ENCODE measurements at regions of chr12 and their contacts with region 1.

Region 1: DNA sequence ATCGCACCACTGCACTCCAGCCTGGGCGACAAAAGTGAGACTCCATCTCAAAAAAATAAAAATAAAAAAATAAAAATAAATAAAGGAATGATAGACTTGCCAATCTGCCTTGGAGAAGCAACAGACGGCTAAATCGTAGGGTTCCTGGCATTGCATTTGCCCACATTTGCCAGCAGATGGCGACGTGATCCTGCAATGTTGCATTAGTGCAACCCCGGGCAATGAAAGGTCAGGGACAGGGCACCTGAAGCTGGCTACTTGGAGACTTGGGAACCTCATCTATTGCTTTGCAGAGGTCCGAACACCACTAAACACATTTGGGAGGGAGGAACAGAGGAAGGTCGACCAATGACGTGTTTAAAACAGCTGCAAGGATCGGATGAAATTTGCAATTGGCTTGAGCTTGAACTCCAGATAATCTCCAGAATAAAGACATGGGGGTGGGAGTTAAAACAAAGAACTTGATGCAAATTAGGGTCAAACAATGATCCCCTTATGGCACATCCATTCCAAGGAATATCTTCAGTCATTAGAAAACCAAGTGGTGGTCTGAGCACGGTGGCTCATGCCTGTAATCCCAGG is 34.6 kb downstream of the SPRING1 start:
- DNase-seq: peak; percentile 88
- ATAC-seq: peak; percentile 91
- H3K4me3 ChIP-seq: no peak overlapping the region
- H3K27ac ChIP-seq: no peak overlapping the region
- H3K4me1 ChIP-seq: peaks cover 7% of the 10 kb centered on the region
- H3K27me3 ChIP-seq: no peaks in the 10 kb centered on the region
- CTCF ChIP-seq: peak; percentile 91

Region 2: DNA sequence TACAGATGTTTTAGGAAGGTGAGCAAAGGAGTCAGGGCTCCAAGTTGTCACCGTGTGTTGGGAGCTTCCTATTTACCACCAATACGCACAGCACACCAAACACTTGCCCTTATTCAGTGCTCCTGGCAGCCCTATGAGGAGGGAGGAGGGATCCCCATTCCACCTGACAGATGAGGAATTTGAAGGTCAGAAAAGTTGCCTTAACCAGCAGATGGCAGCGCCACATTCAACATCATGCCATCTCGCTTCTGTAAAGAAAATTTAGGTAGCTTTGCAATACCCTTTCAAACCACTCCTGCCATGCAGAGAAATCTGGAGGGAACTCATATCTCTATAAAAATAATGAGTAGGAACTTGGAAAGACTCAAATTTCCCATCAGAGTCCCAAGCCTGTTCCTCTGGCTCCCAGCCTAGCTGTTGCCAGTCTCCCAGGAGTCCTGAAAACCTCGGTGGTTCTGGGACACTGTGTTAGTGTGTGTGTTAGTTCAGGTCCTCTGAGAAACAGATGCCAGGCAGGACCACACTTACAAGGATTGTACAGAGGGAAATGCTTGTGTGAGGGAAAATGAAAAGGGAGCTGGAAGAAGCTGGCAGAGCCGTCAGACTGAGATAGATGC is 836.3 kb before region 1 on chr12:
- CTCF ChIA-PET with region 1: interaction called, 5 read pairs
- POLR2A ChIA-PET with region 1: no interaction called
- intact Hi-C with region 1: loop called (anchors 10 kb)
- DNase-seq: peak; percentile 66
- ATAC-seq: peak; percentile 75
- H3K4me3 ChIP-seq: no peak overlapping the region
- H3K27ac ChIP-seq: no peak overlapping the region
- H3K4me1 ChIP-seq: peaks cover 16% of the 10 kb centered on the region
- H3K27me3 ChIP-seq: peaks cover 33% of the 10 kb centered on the region
- CTCF ChIP-seq: peak; percentile 70

Region 3: GRCh38 chr12:116852294-116852693 is 149.0 kb after region 1 on chr12:
- CTCF ChIA-PET with region 1: no interaction called
- POLR2A ChIA-PET with region 1: no interaction called
- intact Hi-C with region 1: no loop called
- DNase-seq: no peak
- ATAC-seq: no peak
- H3K4me3 ChIP-seq: no peak overlapping the region
- H3K27ac ChIP-seq: no peak overlapping the region
- H3K4me1 ChIP-seq: peaks cover 7% of the 10 kb centered on the region; the same call in 1 of the 2 replicates
- H3K27me3 ChIP-seq: no peaks in the 10 kb centered on the region
- CTCF ChIP-seq: no peak

Region 4: GRCh38 chr12:116880817-116881324 is 177.6 kb after region 1 on chr12:
- CTCF ChIA-PET with region 1: interaction called, 8 read pairs
- POLR2A ChIA-PET with region 1: no interaction called
- intact Hi-C with region 1: loop called (anchors 1 kb)
- DNase-seq: peak; percentile 72
- ATAC-seq: peak; percentile 83
- H3K4me3 ChIP-seq: peak overlapping the region; percentile 72
- H3K27ac ChIP-seq: no peak overlapping the region
- H3K4me1 ChIP-seq: peaks cover 30% of the 10 kb centered on the region
- H3K27me3 ChIP-seq: peaks cover 27% of the 10 kb centered on the region
- CTCF ChIP-seq: no peak; the same call in 1 of the 2 replicates

Region 5: DNA sequence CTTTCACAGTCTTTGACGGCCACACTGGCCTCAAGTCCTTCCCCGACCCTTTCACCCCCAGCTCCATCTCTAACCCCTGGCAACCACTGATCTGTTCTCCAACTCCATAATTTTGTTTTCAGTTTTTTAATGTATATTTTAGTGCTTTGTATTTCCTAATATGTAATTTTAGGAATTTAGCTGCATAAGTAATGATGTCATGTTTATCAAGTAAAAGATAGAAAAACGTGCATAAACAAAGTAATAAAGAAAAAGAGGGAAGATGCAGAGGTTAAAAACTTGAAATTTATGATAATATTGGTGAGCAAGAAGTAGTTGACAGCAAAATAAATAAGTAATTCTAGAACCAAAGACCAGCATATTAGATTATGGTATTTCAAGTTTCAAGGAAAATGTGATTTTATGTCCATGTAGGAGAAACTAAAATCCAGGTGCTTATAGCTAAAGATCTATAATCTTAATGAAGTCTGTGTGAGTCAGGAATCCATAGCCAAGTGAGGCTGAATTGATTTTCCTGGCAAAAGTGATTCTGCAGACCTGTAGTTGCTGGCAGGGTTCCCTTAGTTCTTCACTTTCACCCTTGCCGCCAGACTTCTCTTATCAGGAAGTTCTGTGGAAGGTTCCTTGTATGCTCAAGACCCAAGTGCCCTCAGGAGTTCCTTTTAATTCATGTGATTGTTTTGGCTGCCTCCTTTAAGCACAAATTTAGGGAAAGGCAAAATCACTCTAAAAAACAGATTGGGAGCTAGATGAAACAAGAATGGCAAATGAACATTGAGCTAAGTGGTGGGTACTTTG is 231.8 kb after region 1 on chr12:
- CTCF ChIA-PET with region 1: no interaction called
- POLR2A ChIA-PET with region 1: no interaction called
- intact Hi-C with region 1: no loop called
- DNase-seq: no peak
- ATAC-seq: no peak
- H3K4me3 ChIP-seq: no peak overlapping the region
- H3K27ac ChIP-seq: no peak overlapping the region
- H3K4me1 ChIP-seq: no peaks in the 10 kb centered on the region
- H3K27me3 ChIP-seq: no peaks in the 10 kb centered on the region
- CTCF ChIP-seq: no peak

Region 6: DNA sequence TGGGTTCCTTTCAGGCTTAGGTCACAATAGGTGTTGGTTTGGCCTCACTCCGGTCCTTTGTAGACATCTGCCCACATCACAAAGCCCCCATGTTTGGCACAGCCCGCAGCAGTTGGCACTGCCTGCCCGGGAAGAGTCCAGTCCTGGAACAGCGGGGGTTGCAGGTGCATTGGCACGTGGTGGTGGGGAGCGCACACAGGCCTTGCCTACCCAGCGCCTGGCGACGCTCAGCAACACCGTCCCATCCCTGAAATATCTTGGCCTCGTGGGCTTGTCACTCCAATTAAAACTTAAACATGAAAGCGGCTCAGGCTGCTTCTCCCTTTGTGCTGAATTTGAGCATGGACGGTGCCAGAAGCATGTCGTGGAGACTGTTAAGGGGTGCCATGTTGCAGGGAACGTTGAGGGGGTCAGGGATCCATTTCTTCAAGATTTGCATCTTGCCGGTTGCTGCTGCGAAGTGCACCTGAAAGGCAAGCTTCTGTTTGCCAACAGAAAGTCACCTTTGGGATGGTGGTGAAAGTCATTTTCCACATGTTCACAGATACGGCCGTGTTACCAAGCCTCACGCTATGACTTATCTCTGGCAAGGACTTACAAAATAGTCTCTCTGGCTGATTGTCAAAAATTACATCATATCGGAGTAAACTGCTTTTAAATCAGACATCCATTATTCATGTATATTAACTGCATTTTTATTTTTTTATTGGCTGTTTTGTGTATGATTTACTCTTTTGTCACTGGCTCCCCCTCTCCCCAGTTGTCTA is 298.9 kb after region 1 on chr12:
- CTCF ChIA-PET with region 1: no interaction called
- POLR2A ChIA-PET with region 1: no interaction called
- intact Hi-C with region 1: no loop called
- DNase-seq: no peak
- ATAC-seq: no peak
- H3K4me3 ChIP-seq: no peak overlapping the region
- H3K27ac ChIP-seq: no peak overlapping the region
- H3K4me1 ChIP-seq: no peaks in the 10 kb centered on the region
- H3K27me3 ChIP-seq: no peaks in the 10 kb centered on the region
- CTCF ChIP-seq: no peak

Measured in PC-3 (cell line).